ENCODE measurements at regions of chr6 and their contacts with region 1.

Region 1: GRCh38 chr6:137944793-137945498 is 77.9 kb downstream of the TNFAIP3 start:
- DNase-seq: no peak
- H3K4me3 Mint-ChIP-seq: no peak overlapping the region
- H3K27ac Mint-ChIP-seq: peak overlapping the region; percentile 15
- H3K4me1 Mint-ChIP-seq: peaks cover 86% of the 10 kb centered on the region
- H3K27me3 Mint-ChIP-seq: no peaks in the 10 kb centered on the region

Region 2: GRCh38 chr6:137883400-137884148 is 61.4 kb before region 1 on chr6:
- intact Hi-C with region 1: loop called (anchors 2 kb)
- DNase-seq: no peak
- H3K4me3 Mint-ChIP-seq: peak overlapping the region; percentile 44
- H3K27ac Mint-ChIP-seq: peak overlapping the region; percentile 95
- H3K4me1 Mint-ChIP-seq: peaks cover 49% of the 10 kb centered on the region
- H3K27me3 Mint-ChIP-seq: no peaks in the 10 kb centered on the region

Region 3: GRCh38 chr6:137903933-137904821 is 40.8 kb before region 1 on chr6:
- intact Hi-C with region 1: loop called (anchors 1 kb)
- DNase-seq: no peak
- H3K4me3 Mint-ChIP-seq: peak overlapping the region; percentile 19
- H3K27ac Mint-ChIP-seq: peak overlapping the region; percentile 97
- H3K4me1 Mint-ChIP-seq: peaks cover 59% of the 10 kb centered on the region
- H3K27me3 Mint-ChIP-seq: no peaks in the 10 kb centered on the region

Region 4: GRCh38 chr6:137927777-137928218 is 17.1 kb before region 1 on chr6:
- intact Hi-C with region 1: loop called (anchors 1 kb)
- DNase-seq: peak; percentile 80
- H3K4me3 Mint-ChIP-seq: peak overlapping the region; percentile 52
- H3K27ac Mint-ChIP-seq: peak overlapping the region; percentile 93
- H3K4me1 Mint-ChIP-seq: peaks cover 82% of the 10 kb centered on the region
- H3K27me3 Mint-ChIP-seq: no peaks in the 10 kb centered on the region

Region 5: DNA sequence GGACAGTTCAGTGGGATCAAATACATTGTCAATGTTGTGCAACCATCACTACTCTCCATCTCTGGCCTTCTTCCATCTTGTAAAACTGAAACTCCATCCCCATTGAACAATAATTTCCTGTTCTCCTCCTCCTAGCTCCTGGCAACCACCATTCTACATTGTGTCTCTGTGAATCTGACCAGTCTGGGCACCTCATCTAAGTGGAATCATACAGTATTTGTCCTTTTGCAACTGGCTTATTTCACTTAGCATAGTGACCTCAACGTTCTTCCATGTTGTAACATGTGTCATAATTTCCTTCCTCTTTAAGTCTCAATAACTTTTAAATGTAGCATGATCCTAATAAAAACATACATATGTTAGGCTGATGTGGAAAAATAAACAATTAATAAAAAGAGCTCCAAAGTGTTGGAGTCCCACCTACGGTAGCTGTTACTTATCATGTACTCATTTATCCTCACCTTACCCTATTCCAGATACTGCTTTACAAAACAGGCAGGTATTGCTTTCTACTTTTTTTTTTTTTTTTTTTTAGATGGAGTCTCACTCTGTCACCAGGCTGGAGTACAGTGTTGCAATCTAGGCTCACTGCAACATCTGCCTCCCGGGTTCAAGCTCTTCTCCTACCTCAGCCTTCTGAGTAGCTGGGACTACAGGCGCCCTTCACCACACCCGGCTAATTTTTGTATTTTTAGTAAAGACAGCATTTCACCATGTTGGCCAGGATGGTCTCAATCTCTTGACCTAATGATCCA is 14.0 kb after region 1 on chr6:
- intact Hi-C with region 1: loop called (anchors 1 kb)
- DNase-seq: no peak
- H3K4me3 Mint-ChIP-seq: no peak overlapping the region
- H3K27ac Mint-ChIP-seq: no peak overlapping the region
- H3K4me1 Mint-ChIP-seq: peaks cover 17% of the 10 kb centered on the region
- H3K27me3 Mint-ChIP-seq: peaks cover 4% of the 10 kb centered on the region

Region 6: DNA sequence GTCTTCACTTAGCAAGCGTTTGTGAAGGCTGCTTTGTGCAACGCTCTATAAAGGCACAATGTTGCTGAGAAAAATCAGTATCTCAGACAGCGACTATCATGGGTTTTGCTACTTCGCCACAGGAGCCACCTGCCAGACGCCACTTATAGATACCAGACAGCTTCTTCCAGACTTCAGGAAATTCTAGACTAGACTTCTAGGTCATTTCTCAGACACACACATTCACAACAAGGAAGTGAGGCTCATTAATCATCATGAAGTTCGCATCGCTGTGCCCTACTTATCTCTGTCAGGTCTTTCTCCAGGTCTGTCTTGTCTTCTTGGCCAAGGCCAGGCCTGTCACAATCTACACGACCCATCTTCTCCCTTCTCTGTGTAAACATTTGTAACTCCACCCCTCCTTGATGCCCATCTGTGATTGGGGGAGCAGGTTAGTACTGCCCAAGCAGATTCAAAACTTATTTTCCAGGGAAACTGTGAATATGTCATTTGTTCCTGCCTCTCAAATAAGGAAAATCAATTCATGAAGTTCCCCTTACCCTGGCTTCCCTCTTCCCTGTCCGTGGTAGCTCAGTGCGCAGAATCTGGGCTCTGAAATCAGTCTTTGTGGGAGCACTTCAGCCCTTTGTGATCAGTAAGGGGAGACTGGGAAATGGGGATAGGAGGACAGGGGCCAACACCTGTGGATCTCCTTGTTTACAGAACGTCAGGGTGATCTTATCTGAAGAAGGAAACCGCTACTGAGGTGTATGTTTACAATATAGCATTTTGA is 37.7 kb after region 1 on chr6:
- intact Hi-C with region 1: no loop called
- DNase-seq: no peak
- H3K4me3 Mint-ChIP-seq: no peak overlapping the region
- H3K27ac Mint-ChIP-seq: no peak overlapping the region
- H3K4me1 Mint-ChIP-seq: peaks cover 16% of the 10 kb centered on the region
- H3K27me3 Mint-ChIP-seq: peaks cover 4% of the 10 kb centered on the region

Region 7: GRCh38 chr6:138001750-138002349 is 56.9 kb after region 1 on chr6:
- intact Hi-C with region 1: loop called (anchors 1 kb)
- DNase-seq: peak; percentile 38
- H3K4me3 Mint-ChIP-seq: no peak overlapping the region
- H3K27ac Mint-ChIP-seq: no peak overlapping the region
- H3K4me1 Mint-ChIP-seq: peaks cover 27% of the 10 kb centered on the region
- H3K27me3 Mint-ChIP-seq: peaks cover 6% of the 10 kb centered on the region